Naive thymus-derived CD4-positive, alpha-beta T cell (primary cell): ENCODE measurements at regions of chr1 and their contacts with region 1.

Region 1: GRCh38 chr1:155562581-155563376 is at the start of gene ASH1L:
- DNase-seq: peak; percentile 85 to 94 (median 90)
- ATAC-seq: peak; percentile 90
- H3K4me3 ChIP-seq: peak within 1 kb of the TSS; percentile 100
- H3K4me3 Mint-ChIP-seq: peak within 1 kb of the TSS; percentile 91 to 100 (median 98)
- H3K27ac ChIP-seq: peak within 1 kb of the TSS; percentile 86
- H3K27ac Mint-ChIP-seq: peak within 1 kb of the TSS; percentile 95 to 100 (median 98)
- H3K4me1 ChIP-seq: peaks cover 26 to 32% of the 10 kb centered on the region in 2 donors
- H3K4me1 Mint-ChIP-seq: peaks cover 15 to 56% (median 47%) of the 10 kb centered on the region in 7 donors
- H3K27me3 ChIP-seq: no peaks in the 10 kb centered on the region
- H3K27me3 Mint-ChIP-seq: peaks cover 0 to 4% (median 0%) of the 10 kb centered on the region in 5 donors
- total RNA-seq, gene ASH1L: 57.2 to 109 (median 95.1) TPM

Region 2: GRCh38 chr1:154998818-154999570 is 563.8 kb before region 1 on chr1:
- CTCF ChIA-PET with region 1: no interaction called
- POLR2A ChIA-PET with region 1: no interaction called
- intact Hi-C with region 1: no loop called
- DNase-seq: peak in 8 of 9 donors; percentile 49 to 75 (median 58)
- ATAC-seq: no peak
- H3K4me3 ChIP-seq: peak overlapping the region; percentile 66
- H3K4me3 Mint-ChIP-seq: peak overlapping the region; percentile 80 to 99 (median 91)
- H3K27ac ChIP-seq: peak overlapping the region; percentile 88
- H3K27ac Mint-ChIP-seq: peak overlapping the region; percentile 83 to 97 (median 91)
- H3K4me1 ChIP-seq: peaks cover 4 to 11% of the 10 kb centered on the region in 2 donors
- H3K4me1 Mint-ChIP-seq: peaks cover 12 to 42% (median 32%) of the 10 kb centered on the region in 7 donors
- H3K27me3 ChIP-seq: no peaks in the 10 kb centered on the region
- H3K27me3 Mint-ChIP-seq: no peaks in the 10 kb centered on the region

Region 3: DNA sequence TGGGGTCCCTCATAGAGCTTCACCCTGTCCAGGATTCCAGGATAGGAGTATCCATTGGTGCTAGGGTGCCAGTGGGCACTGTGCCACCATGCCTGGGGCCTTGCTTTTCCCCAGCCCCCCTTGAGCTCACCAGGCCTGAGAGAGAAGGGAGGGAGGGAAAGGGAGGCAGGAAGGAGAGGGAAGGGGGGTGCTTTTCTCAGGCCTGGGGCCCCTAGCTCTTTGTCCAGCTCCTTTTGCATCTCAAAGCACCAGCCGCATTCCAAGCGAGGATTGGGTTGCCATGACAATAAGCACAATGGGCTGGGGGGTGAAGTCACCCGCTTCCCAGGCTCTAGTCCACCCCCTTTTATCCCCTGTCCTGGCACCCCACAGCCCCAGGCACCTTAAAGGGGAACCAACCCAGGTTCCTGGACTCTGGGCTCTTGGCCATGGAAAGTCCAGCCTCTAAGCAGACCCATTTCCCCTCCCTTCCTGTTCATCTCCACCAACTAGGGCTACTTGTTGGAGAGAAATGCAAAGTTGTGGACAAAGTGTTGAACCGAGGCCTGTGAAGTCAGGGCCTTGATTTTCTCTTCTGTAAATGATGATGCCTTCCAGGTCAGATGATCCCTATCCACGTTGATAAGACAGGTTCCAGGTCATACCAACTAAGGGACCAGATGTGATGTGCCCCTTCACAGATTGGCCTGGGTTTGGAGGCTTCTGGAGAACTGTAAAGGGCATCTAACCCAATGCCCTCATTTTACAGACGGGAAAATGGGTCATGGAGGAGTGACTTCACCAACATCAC is 366.5 kb before region 1 on chr1:
- CTCF ChIA-PET with region 1: no interaction called
- POLR2A ChIA-PET with region 1: no interaction called
- intact Hi-C with region 1: no loop called
- DNase-seq: no peak
- ATAC-seq: no peak
- H3K4me3 ChIP-seq: no peak overlapping the region
- H3K4me3 Mint-ChIP-seq: peak overlapping the region in 8 of 10 donors; percentile 21 to 80 (median 54)
- H3K27ac ChIP-seq: no peak overlapping the region
- H3K27ac Mint-ChIP-seq: peak overlapping the region in 6 of 9 donors; percentile 57 to 89 (median 75)
- H3K4me1 ChIP-seq: peaks cover 11 to 25% of the 10 kb centered on the region in 2 donors
- H3K4me1 Mint-ChIP-seq: peaks cover 8 to 35% (median 28%) of the 10 kb centered on the region in 7 donors
- H3K27me3 ChIP-seq: no peaks in the 10 kb centered on the region
- H3K27me3 Mint-ChIP-seq: no peaks in the 10 kb centered on the region

Region 4: GRCh38 chr1:155277070-155277895 is 285.5 kb before region 1 on chr1 and contains the start of gene HCN3:
- CTCF ChIA-PET with region 1: no interaction called
- POLR2A ChIA-PET with region 1: interaction called, 4 read pairs
- intact Hi-C with region 1: loop called in 1 of 2 experiments (anchors 1 kb)
- DNase-seq: peak; percentile 68 to 95 (median 70)
- ATAC-seq: peak; percentile 71
- H3K4me3 ChIP-seq: peak within 1 kb of the TSS; percentile 59
- H3K4me3 Mint-ChIP-seq: peak within 1 kb of the TSS; percentile 75 to 90 (median 86)
- H3K27ac ChIP-seq: peak within 1 kb of the TSS; percentile 36
- H3K27ac Mint-ChIP-seq: peak within 1 kb of the TSS in 8 of 9 donors; percentile 44 to 83 (median 69)
- H3K4me1 ChIP-seq: peaks cover 18 to 19% of the 10 kb centered on the region in 2 donors
- H3K4me1 Mint-ChIP-seq: peaks cover 24 to 47% (median 38%) of the 10 kb centered on the region in 7 donors
- H3K27me3 ChIP-seq: no peaks in the 10 kb centered on the region
- H3K27me3 Mint-ChIP-seq: peaks cover 0 to 11% (median 0%) of the 10 kb centered on the region in 5 donors
- total RNA-seq, gene HCN3: 1.6 to 3.3 (median 2.8) TPM

Region 5: DNA sequence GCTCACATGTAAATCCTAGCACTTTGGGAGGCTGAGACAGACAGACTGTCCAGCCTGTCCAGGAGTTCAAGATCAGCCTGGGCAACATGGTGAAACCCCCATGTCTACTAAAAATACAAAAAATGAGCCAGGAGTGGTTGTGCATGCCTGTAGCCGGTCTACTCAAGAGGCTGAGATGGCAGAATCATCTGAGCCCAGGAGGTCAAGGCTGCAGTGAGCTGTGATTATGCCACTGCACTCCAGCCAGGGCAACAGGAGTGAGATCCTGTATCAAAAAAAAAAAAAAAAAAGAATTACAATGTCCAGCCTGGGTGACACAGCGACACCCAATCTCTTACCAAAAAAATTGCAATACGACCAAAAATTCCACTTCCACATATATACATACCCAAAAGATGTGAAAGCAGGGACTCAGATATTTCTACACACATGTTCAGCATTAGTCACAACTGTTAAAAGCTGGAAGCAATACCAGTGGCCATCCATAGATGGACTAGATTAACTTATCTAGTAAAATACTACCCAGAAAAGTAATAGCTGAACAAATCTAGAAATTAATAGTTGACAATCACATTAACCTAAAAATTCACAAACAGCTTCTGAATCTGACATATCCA is 49.4 kb before region 1 on chr1:
- CTCF ChIA-PET with region 1: no interaction called
- POLR2A ChIA-PET with region 1: interaction called, 3 read pairs
- intact Hi-C with region 1: loop called (anchors 5 kb)
- DNase-seq: no peak
- ATAC-seq: peak; percentile 65
- H3K4me3 ChIP-seq: no peak overlapping the region
- H3K4me3 Mint-ChIP-seq: peak overlapping the region in 2 of 10 donors; percentile 70 to 79
- H3K27ac ChIP-seq: peak overlapping the region; percentile 27
- H3K27ac Mint-ChIP-seq: peak overlapping the region in 7 of 9 donors; percentile 2 to 87 (median 38)
- H3K4me1 ChIP-seq: peaks cover 9 to 19% of the 10 kb centered on the region in 2 donors
- H3K4me1 Mint-ChIP-seq: peaks cover 31 to 73% (median 62%) of the 10 kb centered on the region in 7 donors
- H3K27me3 ChIP-seq: no peaks in the 10 kb centered on the region
- H3K27me3 Mint-ChIP-seq: no peaks in the 10 kb centered on the region

Region 6: GRCh38 chr1:155609515-155610256 is 46.9 kb after region 1 on chr1 and contains the start of gene MSTO1:
- CTCF ChIA-PET with region 1: interaction called, 3 read pairs
- POLR2A ChIA-PET with region 1: no interaction called
- intact Hi-C with region 1: loop called in 1 of 2 experiments (anchors 1 kb)
- DNase-seq: peak; percentile 67 to 96 (median 89)
- ATAC-seq: peak; percentile 98
- H3K4me3 ChIP-seq: peak within 1 kb of the TSS; percentile 82
- H3K4me3 Mint-ChIP-seq: peak within 1 kb of the TSS; percentile 86 to 99 (median 96)
- H3K27ac ChIP-seq: peak within 1 kb of the TSS; percentile 76
- H3K27ac Mint-ChIP-seq: peak within 1 kb of the TSS; percentile 83 to 95 (median 95)
- H3K4me1 ChIP-seq: no peaks in the 10 kb centered on the region
- H3K4me1 Mint-ChIP-seq: peaks cover 3 to 10% (median 6%) of the 10 kb centered on the region in 7 donors
- H3K27me3 ChIP-seq: no peaks in the 10 kb centered on the region
- H3K27me3 Mint-ChIP-seq: peaks cover 0 to 2% (median 0%) of the 10 kb centered on the region in 5 donors
- total RNA-seq, gene MSTO1: 54.8 to 129 (median 76.7) TPM

Region 7: DNA sequence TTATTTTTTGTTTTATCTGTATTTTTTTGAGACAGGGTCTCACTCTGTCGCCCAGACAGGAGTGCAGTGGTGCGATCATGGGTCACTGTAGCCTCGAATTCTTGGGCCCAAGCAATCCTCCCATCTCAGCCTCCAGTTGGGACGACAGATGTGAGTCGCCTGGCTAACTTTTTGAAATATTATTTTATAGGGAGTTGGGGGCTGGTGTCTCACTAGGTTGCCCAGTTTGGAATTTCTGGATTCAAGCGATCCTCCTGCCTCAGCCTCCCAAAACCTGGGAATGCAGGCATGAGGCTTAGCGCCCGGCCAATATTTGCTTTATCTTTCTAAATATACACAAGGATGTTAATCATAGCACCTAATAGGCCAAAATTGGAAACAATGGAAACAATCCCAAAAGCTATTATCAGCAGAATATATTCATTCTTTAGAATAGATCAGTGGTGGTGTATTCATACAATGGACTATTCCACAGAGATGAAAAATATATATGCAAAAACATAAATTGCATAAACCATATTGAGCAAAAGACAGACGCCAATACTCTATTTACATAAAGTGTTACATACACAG is 182.0 kb after region 1 on chr1:
- CTCF ChIA-PET with region 1: no interaction called
- POLR2A ChIA-PET with region 1: interaction called, 5 read pairs
- intact Hi-C with region 1: loop called in 1 of 2 experiments (anchors 2 kb)
- DNase-seq: no peak
- ATAC-seq: no peak
- H3K4me3 ChIP-seq: peak overlapping the region; percentile 80
- H3K4me3 Mint-ChIP-seq: peak overlapping the region; percentile 89 to 98 (median 95)
- H3K27ac ChIP-seq: peak overlapping the region; percentile 78
- H3K27ac Mint-ChIP-seq: peak overlapping the region; percentile 90 to 97 (median 92)
- H3K4me1 ChIP-seq: peaks cover 6 to 7% of the 10 kb centered on the region in 2 donors
- H3K4me1 Mint-ChIP-seq: peaks cover 4 to 12% (median 8%) of the 10 kb centered on the region in 7 donors
- H3K27me3 ChIP-seq: no peaks in the 10 kb centered on the region
- H3K27me3 Mint-ChIP-seq: no peaks in the 10 kb centered on the region